ENCODE measurements at regions of chrX and their contacts with region 1.

Region 1: DNA sequence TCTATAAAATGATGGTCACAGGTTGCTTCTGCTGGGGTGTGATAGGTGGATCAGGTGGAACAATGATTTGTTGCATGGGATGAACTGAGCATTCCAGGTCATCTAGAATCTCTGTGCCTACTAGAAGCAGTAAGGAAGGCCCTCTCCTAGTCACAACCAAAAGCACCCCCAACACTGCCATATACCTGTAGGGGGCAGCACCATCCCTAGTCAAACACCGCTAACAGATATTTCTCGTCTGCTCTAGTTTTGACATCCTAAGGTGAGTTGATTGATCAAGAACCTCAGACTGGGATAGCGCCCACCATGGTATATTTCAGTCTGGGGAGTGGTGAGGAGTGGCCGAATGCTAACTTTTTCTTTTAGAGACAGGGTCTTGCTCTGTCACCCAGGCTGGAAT is 160.2 kb downstream of the NHS start:
- DNase-seq: peak; percentile 23
- CTCF ChIP-seq: peak; percentile 41

Region 2: DNA sequence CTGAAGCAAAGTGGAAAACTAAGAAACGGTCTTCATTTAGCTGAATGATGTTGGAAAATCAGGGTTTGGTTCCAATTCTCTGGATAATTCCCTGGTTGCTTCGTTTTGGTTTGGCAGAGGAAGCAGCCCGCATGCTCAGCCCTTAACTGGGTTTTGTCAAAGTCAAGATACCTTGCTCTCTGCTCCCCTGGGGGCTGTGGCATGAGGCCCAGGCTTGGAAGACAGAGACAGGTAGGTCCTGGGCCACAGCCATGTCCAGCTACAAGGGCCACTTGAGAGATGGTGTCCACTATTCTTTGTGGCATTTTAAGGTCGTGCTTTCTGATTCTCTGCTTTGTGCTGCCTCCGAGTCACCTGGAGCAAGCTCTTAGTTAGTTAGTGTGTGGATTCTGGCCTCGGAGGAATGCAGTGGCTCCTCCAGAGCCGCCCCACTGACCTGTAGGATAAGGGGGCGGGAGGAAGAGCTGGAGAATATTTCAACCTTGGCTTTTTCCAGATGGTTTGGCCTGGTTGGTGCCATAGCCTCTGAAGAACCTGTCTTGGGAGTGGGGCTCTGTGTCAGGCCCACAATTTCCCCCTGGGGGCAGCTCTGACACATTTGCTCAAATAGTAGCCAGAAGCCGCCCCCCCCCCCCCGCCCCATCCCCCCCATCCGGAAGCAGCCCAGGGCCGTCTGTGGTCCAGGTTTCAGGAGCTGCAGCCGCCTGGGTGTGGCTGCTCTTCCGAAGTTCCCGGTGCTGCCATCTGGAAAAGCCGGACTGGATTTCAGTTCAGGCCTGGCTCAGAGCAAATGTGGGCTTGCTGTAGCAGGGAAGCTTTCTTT is 13.1 kb before region 1 on chrX:
- CTCF ChIA-PET with region 1: no interaction called
- POLR2A ChIA-PET with region 1: no interaction called
- DNase-seq: no peak
- CTCF ChIP-seq: no peak

Region 3: GRCh38 chrX:17590892-17591740 is 55.9 kb after region 1 on chrX:
- CTCF ChIA-PET with region 1: interaction called, 17 read pairs
- POLR2A ChIA-PET with region 1: no interaction called
- DNase-seq: peak; percentile 23
- CTCF ChIP-seq: peak; percentile 52

Region 4: GRCh38 chrX:17680732-17681413 is 145.6 kb after region 1 on chrX:
- CTCF ChIA-PET with region 1: no interaction called
- POLR2A ChIA-PET with region 1: no interaction called
- DNase-seq: no peak
- CTCF ChIP-seq: no peak

Region 5: DNA sequence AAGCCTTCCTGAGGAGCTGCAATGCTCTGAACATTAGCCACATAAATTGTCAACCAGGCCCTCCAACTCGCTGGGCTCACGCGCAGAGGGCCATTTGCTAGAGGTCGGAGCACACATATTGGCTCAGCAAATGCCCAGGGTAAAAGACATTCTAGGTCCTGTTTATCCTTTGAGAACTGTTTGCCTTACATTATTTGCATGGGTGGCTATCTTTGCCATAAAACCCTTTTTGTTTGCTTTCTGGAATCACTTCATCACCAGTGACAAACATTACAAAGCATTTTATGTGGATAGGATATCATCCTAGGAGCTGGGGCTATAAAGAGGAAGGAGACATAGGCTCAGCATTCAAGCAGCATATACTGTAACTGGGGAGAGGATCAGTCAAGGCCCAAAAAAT is 475.0 kb after region 1 on chrX:
- CTCF ChIA-PET with region 1: no interaction called
- POLR2A ChIA-PET with region 1: no interaction called
- DNase-seq: no peak
- CTCF ChIP-seq: no peak